IMR-90 (cell line): ENCODE measurements at regions of chr3 and their contacts with region 1.

Region 1: DNA sequence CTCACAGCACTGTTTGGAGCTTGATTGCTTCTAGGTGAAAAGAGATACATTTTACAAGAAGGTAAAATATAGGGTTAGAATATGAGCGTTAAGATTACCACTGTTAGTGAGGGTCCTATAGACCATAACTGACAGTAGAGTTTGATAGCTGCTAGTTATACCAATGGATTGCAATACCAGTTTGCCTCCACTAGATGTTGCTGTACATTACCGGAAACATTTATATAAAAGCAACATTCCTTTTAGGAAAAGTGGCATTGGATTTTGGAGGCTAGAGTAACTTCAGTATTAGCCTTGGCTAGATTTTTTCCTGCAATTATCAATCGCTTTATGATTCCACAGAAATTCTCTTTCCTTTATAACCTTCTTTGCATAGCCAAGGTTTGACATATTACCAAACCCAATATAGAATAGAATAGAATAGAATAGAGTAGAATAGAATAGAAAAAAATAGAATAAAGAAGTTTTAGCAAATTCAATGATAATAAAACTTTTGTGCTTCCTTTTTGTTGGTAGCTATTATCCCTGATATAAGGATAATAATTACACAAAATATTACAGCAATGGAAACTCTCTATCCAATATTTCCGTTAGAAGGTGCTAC is 1093.6 kb upstream of the ALCAM start:
- DNase-seq: peak; percentile 53
- ATAC-seq: peak; percentile 76
- H3K4me3 ChIP-seq: no peak overlapping the region
- H3K27ac ChIP-seq: no peak overlapping the region
- H3K4me1 ChIP-seq: no peaks in the 10 kb centered on the region
- H3K27me3 ChIP-seq: no peaks in the 10 kb centered on the region; the same call in 1 of the 2 replicates
- CTCF ChIP-seq: peak; percentile 84
- POLR2A ChIP-seq: no peak
- RAD21 ChIP-seq: peak; percentile 86

Region 2: GRCh38 chr3:102979682-102980369 is 1293.3 kb before region 1 on chr3:
- CTCF ChIA-PET with region 1: no interaction called
- POLR2A ChIA-PET with region 1: no interaction called
- dilution Hi-C with region 1: no loop called
- in situ Hi-C with region 1: no loop called
- intact Hi-C with region 1: no loop called
- DNase-seq: peak; percentile 84
- ATAC-seq: peak; percentile 77
- H3K4me3 ChIP-seq: no peak overlapping the region
- H3K27ac ChIP-seq: no peak overlapping the region
- H3K4me1 ChIP-seq: no peaks in the 10 kb centered on the region
- H3K27me3 ChIP-seq: no peaks in the 10 kb centered on the region
- CTCF ChIP-seq: no peak
- POLR2A ChIP-seq: no peak
- RAD21 ChIP-seq: no peak

Region 3: DNA sequence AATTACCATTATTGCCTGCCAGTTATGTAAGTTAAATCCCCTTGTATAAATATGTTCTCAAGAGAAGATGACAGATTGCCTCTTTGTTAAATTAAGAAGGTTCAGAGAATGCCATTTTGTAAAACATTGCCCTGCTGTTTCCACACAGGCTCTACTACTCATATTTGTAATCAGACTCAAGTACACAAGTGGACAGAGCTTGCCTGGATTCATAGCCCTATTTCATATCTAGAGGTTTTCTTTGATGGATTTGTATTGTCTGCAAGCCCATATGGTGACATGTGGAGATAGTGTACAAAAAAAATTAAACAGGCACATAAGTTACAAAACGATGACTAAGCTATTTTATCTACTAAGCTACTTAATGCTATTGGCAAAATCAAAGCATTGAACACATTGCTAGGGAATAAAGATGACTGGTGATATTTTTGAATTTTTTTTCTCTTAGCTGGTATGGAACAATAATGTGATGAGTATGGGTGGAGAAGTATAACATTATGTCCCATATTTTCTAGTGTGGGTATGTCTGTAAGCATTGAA is 193.0 kb before region 1 on chr3:
- CTCF ChIA-PET with region 1: no interaction called
- POLR2A ChIA-PET with region 1: no interaction called
- dilution Hi-C with region 1: no loop called
- in situ Hi-C with region 1: no loop called
- intact Hi-C with region 1: no loop called
- DNase-seq: no peak
- ATAC-seq: no peak
- H3K4me3 ChIP-seq: no peak overlapping the region
- H3K27ac ChIP-seq: no peak overlapping the region
- H3K4me1 ChIP-seq: no peaks in the 10 kb centered on the region
- H3K27me3 ChIP-seq: no peaks in the 10 kb centered on the region
- CTCF ChIP-seq: no peak
- POLR2A ChIP-seq: no peak
- RAD21 ChIP-seq: no peak

Region 4: DNA sequence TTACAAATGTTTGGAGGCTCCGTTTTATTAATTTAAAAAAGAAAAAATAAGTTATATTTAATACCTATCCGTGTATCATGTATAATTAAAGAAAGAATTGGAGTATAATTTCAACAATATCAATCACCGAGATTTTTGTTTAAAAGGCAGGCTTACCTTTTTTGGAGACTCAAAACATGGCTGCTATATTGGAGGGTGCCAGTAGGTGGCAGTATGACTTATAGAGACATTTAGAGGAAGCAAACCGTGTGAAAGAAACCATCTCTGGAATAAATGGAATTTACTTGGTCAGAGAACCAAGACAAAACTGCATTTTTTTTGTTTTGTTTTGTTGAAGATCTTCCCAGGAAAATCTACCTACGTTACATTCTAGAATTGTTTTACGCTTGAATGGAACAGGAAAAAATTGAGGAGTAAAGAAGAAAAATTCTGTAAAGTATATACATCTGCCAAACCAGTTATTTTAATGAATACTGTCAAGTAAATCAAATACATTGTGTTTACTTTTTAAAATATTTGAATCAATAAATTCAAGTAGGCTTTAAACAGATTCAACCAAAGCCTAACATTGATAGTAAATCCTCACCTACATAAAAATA is 291.0 kb after region 1 on chr3:
- CTCF ChIA-PET with region 1: no interaction called
- POLR2A ChIA-PET with region 1: no interaction called
- dilution Hi-C with region 1: no loop called
- in situ Hi-C with region 1: no loop called
- intact Hi-C with region 1: loop called (anchors 10 kb)
- DNase-seq: peak; percentile 52
- ATAC-seq: 0 out of 2 replicates have a peak, but pooled peaks have one; percentile 42
- H3K4me3 ChIP-seq: no peak overlapping the region
- H3K27ac ChIP-seq: no peak overlapping the region
- H3K4me1 ChIP-seq: no peaks in the 10 kb centered on the region
- H3K27me3 ChIP-seq: no peaks in the 10 kb centered on the region
- CTCF ChIP-seq: peak; percentile 56
- POLR2A ChIP-seq: no peak
- RAD21 ChIP-seq: peak; percentile 56

Region 5: GRCh38 chr3:104596551-104596950 is 323.4 kb after region 1 on chr3:
- CTCF ChIA-PET with region 1: no interaction called
- POLR2A ChIA-PET with region 1: no interaction called
- dilution Hi-C with region 1: no loop called
- in situ Hi-C with region 1: no loop called
- intact Hi-C with region 1: loop called (anchors 5 kb)
- DNase-seq: peak; percentile 67
- ATAC-seq: peak; percentile 72
- H3K4me3 ChIP-seq: no peak overlapping the region
- H3K27ac ChIP-seq: no peak overlapping the region
- H3K4me1 ChIP-seq: no peaks in the 10 kb centered on the region
- H3K27me3 ChIP-seq: no peaks in the 10 kb centered on the region
- CTCF ChIP-seq: peak; percentile 50
- POLR2A ChIP-seq: no peak
- RAD21 ChIP-seq: peak; percentile 58

Region 6: GRCh38 chr3:105662306-105662705 is 1389.2 kb after region 1 on chr3:
- CTCF ChIA-PET with region 1: no interaction called
- POLR2A ChIA-PET with region 1: no interaction called
- dilution Hi-C with region 1: no loop called
- in situ Hi-C with region 1: no loop called
- intact Hi-C with region 1: loop called (anchors 10 kb)
- DNase-seq: no peak
- ATAC-seq: peak; percentile 21; the same call in 1 of the 2 replicates
- H3K4me3 ChIP-seq: no peak overlapping the region
- H3K27ac ChIP-seq: no peak overlapping the region
- H3K4me1 ChIP-seq: peaks cover 2% of the 10 kb centered on the region; the same call in 1 of the 2 replicates
- H3K27me3 ChIP-seq: no peaks in the 10 kb centered on the region
- CTCF ChIP-seq: no peak
- POLR2A ChIP-seq: no peak
- RAD21 ChIP-seq: no peak